CD8-positive, alpha-beta T cell (primary cell): ENCODE measurements at regions of chr4 and their contacts with region 1.

Region 1: GRCh38 chr4:107989537-107990386 is at the start of gene HADH:
- DNase-seq: peak; percentile 87 to 97 (median 94)
- ATAC-seq: peak; percentile 99
- H3K4me3 ChIP-seq: peak within 1 kb of the TSS; percentile 65 to 75
- H3K4me3 Mint-ChIP-seq: peak within 1 kb of the TSS; percentile 96
- H3K27ac ChIP-seq: peak within 1 kb of the TSS; percentile 70 to 74
- H3K27ac Mint-ChIP-seq: peak within 1 kb of the TSS; percentile 95
- H3K4me1 ChIP-seq: peaks cover 28% of the 10 kb centered on the region
- H3K4me1 Mint-ChIP-seq: peaks cover 60% of the 10 kb centered on the region
- H3K27me3 ChIP-seq: no peaks in the 10 kb centered on the region
- H3K27me3 Mint-ChIP-seq: no peaks in the 10 kb centered on the region
- CTCF ChIP-seq: no peak
- total RNA-seq, gene HADH: 9.6 to 10.9 TPM

Region 2: GRCh38 chr4:106315968-106316772 is 1673.6 kb before region 1 on chr4 and contains the starts of genes AIMP1 and TBCK:
- CTCF ChIA-PET with region 1: no interaction called
- POLR2A ChIA-PET with region 1: no interaction called
- intact Hi-C with region 1: loop called in 1 of 2 experiments (anchors 5 kb)
- DNase-seq: peak; percentile 81 to 95 (median 90)
- ATAC-seq: peak; percentile 85
- H3K4me3 ChIP-seq: peak within 1 kb of the TSS; percentile 72 to 85
- H3K4me3 Mint-ChIP-seq: no peak within 1 kb of the TSS
- H3K27ac ChIP-seq: peak within 1 kb of the TSS; percentile 89 to 96
- H3K27ac Mint-ChIP-seq: no peak within 1 kb of the TSS
- H3K4me1 ChIP-seq: peaks cover 19% of the 10 kb centered on the region
- H3K4me1 Mint-ChIP-seq: peaks cover 42% of the 10 kb centered on the region
- H3K27me3 ChIP-seq: no peaks in the 10 kb centered on the region
- H3K27me3 Mint-ChIP-seq: no peaks in the 10 kb centered on the region
- CTCF ChIP-seq: no peak
- total RNA-seq, gene AIMP1: 69.3 to 79.2 TPM
- total RNA-seq, gene TBCK: 17.4 to 20.4 TPM

Region 3: GRCh38 chr4:107906458-107907100 is 83.2 kb before region 1 on chr4:
- CTCF ChIA-PET with region 1: no interaction called
- POLR2A ChIA-PET with region 1: no interaction called
- intact Hi-C with region 1: no loop called
- DNase-seq: no peak
- ATAC-seq: no peak
- H3K4me3 ChIP-seq: no peak overlapping the region
- H3K4me3 Mint-ChIP-seq: no peak overlapping the region
- H3K27ac ChIP-seq: no peak overlapping the region
- H3K27ac Mint-ChIP-seq: no peak overlapping the region
- H3K4me1 ChIP-seq: no peaks in the 10 kb centered on the region
- H3K4me1 Mint-ChIP-seq: no peaks in the 10 kb centered on the region
- H3K27me3 ChIP-seq: no peaks in the 10 kb centered on the region
- H3K27me3 Mint-ChIP-seq: peaks cover 7% of the 10 kb centered on the region
- CTCF ChIP-seq: no peak

Region 4: DNA sequence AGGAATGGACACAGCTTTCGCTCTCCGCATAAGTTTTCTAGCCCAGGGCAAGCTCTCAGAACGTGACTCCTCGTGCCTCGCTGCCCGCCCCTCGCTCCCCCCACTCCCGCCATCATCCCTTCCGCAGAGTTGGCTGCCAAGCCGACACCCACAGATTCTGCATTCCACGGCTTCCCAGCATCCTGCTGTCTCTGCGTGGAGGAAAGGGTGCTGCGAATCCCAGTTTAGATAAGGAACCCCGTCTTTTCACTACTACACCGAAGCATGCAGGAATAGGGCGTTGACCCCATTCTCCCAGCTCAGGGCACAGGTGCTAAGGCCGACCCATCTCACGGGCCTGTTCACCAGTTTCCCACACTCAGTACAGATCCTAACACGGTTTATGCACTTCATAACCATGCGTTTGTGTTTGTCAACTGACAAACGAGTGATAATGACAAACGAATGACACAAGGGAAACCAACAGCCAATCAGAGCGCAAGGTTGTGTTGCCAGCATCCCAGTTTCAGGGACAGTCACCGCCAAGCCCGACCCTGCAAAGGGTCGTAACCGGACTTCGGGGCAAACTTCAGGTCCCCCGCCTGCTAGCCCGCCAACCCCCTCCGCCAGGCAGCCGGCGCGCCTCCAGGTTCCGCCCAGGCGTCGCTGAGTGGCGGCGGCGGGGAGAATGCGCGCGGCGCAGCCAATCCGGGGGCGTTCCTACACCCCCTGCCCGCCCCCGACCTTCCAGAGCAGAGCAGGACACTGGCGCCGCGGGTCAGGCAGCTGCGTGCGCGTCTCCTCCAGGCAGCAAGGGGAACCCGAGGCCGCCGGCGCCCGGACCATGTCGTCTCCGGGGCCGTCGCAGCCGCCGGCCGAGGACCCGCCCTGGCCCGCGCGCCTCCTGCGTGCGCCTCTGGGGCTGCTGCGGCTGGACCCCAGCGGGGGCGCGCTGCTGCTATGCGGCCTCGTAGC is 58.7 kb before region 1 on chr4 and contains the start of gene CYP2U1:
- CTCF ChIA-PET with region 1: no interaction called
- POLR2A ChIA-PET with region 1: interaction called, 4 read pairs
- intact Hi-C with region 1: loop called (anchors 1 to 2 kb)
- DNase-seq: peak; percentile 48 to 89 (median 80)
- ATAC-seq: peak; percentile 92
- H3K4me3 ChIP-seq: peak within 1 kb of the TSS; percentile 61 to 86
- H3K4me3 Mint-ChIP-seq: peak within 1 kb of the TSS; percentile 95
- H3K27ac ChIP-seq: peak within 1 kb of the TSS; percentile 48 to 55
- H3K27ac Mint-ChIP-seq: peak within 1 kb of the TSS; percentile 92
- H3K4me1 ChIP-seq: peaks cover 8% of the 10 kb centered on the region
- H3K4me1 Mint-ChIP-seq: peaks cover 35% of the 10 kb centered on the region
- H3K27me3 ChIP-seq: no peaks in the 10 kb centered on the region
- H3K27me3 Mint-ChIP-seq: no peaks in the 10 kb centered on the region
- CTCF ChIP-seq: no peak
- total RNA-seq, gene CYP2U1: 3.4 to 3.6 TPM

Region 5: DNA sequence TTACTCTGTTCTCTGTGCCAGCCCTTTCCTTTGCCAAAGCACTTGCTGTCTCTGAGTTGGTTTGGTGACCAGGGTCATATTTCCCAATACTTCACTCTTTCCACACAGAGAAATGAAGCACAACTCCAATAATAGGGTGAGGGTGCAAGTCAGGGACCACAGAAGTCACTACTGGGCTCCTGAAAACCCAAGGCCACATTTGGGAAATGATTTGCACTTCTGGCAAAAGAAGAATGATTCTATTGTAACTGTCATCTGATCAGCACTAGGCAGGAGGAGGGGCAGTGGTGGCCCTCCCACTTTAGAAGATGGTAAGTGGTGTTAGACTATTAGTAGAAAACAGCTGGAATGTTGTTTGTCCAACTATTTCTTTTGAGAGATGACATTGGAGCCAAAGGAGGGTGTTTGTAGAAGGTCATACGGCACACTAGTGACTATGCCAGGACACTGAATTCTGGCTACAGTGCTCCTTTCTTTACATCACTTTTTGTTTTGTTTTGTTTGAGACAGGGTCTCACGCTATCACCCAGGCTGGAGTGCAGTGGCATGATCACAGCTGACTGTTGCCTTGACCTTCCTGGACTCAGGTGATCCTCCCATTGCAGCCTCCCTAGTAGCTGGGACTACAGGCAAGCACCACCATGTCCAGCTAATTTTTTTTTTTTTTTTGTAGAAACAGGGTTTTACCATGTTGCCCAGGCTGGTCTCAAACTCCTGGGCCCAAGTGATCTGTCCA is 10.9 kb before region 1 on chr4:
- CTCF ChIA-PET with region 1: no interaction called
- POLR2A ChIA-PET with region 1: no interaction called
- intact Hi-C with region 1: no loop called
- DNase-seq: no peak
- ATAC-seq: no peak
- H3K4me3 ChIP-seq: no peak overlapping the region
- H3K4me3 Mint-ChIP-seq: no peak overlapping the region
- H3K27ac ChIP-seq: no peak overlapping the region
- H3K27ac Mint-ChIP-seq: no peak overlapping the region
- H3K4me1 ChIP-seq: no peaks in the 10 kb centered on the region
- H3K4me1 Mint-ChIP-seq: peaks cover 6% of the 10 kb centered on the region
- H3K27me3 ChIP-seq: no peaks in the 10 kb centered on the region
- H3K27me3 Mint-ChIP-seq: no peaks in the 10 kb centered on the region
- CTCF ChIP-seq: no peak

Region 6: DNA sequence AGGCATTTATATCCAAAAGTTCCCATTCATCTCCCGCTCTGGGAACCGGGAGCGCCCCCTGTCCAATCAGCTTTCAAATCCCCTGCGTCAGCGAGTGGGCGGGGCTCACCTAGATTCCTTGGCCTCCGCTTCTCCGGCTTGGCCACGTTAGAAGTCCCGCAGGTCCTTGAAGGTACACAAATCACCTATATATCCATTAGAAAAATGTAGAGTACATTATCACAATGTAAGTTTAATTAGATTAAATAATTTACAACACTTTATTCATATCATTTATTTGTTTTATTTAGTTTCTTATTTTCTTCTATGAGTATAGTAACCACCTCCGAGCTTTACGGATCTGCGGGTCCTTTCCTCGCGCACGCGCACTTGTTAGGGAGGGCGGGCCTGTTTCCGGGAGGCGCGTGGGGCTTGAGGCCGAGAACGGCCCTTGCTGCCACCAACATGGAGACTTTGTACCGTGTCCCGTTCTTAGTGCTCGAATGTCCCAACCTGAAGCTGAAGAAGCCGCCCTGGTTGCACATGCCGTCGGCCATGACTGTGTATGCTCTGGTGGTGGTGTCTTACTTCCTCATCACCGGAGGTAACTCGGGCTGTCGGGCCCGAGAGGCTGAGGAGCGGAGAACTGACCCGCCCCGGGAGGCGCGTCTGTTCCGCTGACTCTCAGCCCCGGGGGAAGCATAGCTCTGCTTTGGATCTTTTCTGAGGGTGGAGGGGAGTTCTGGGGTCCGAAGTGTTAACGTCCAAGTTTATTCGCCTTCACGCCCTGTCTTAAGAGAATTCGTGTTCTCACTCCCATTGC is 660.7 kb after region 1 on chr4 and contains the start of gene OSTC:
- CTCF ChIA-PET with region 1: no interaction called
- POLR2A ChIA-PET with region 1: interaction called, 3 read pairs
- intact Hi-C with region 1: loop called in 1 of 2 experiments (anchors 1 kb)
- DNase-seq: peak; percentile 81 to 96 (median 93)
- ATAC-seq: peak; percentile 89
- H3K4me3 ChIP-seq: peak within 1 kb of the TSS; percentile 83 to 98
- H3K4me3 Mint-ChIP-seq: peak within 1 kb of the TSS; percentile 93
- H3K27ac ChIP-seq: peak within 1 kb of the TSS; percentile 93 to 94
- H3K27ac Mint-ChIP-seq: peak within 1 kb of the TSS; percentile 98
- H3K4me1 ChIP-seq: peaks cover 23% of the 10 kb centered on the region
- H3K4me1 Mint-ChIP-seq: peaks cover 40% of the 10 kb centered on the region
- H3K27me3 ChIP-seq: no peaks in the 10 kb centered on the region
- H3K27me3 Mint-ChIP-seq: no peaks in the 10 kb centered on the region
- CTCF ChIP-seq: no peak
- total RNA-seq, gene OSTC: 25.6 to 28.1 TPM

Region 7: DNA sequence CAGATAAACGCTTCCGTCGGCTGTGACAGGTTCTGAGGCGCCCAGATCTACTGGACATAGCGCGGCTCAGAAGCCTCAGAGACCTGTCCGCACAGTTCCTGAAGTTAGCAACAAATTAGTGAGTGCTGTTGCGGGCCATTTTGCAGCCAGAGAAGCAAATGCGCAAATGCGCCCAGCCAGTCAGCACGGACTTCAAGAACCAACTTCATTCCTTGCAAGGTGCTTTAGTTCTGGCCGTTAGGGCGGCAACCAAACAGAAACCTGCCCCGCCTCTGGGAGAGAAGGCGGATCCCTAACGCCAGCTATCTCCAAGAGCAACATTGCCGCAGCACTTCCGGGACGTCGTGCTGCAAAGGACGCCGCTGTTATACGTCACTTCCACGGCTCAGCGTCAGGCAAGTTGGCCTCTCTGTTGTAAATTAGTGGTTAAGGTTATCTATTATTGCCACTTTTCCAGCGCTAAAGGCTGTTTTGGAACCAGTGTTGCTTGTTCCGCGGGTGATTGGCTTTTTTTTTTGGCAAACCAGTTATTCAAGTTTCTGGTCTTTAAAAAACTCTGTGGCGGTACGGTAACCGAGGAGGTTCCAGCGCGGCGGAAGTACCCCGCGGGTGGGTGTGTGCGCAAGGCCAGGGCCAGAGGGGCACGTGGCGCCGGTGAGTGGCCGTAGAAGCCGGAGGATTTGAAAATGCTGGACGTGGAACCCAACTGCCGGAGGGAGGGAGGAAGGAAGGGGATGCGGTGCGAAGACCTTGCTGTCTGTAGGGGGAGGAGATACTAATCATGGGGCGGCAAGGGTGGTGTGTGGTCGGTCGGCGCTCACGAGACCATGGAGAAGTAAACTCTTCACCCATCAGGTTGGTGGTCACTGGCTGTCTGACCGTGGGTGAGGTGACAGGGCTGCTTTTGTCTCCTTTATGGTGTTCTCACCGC is 1825.7 kb after region 1 on chr4 and contains the start of gene GAR1:
- CTCF ChIA-PET with region 1: no interaction called
- POLR2A ChIA-PET with region 1: no interaction called
- intact Hi-C with region 1: loop called in 1 of 2 experiments (anchors 5 kb)
- DNase-seq: peak; percentile 67 to 95 (median 86)
- ATAC-seq: peak; percentile 92
- H3K4me3 ChIP-seq: peak within 1 kb of the TSS; percentile 85 to 87
- H3K4me3 Mint-ChIP-seq: peak within 1 kb of the TSS; percentile 99
- H3K27ac ChIP-seq: peak within 1 kb of the TSS; percentile 96 to 97
- H3K27ac Mint-ChIP-seq: peak within 1 kb of the TSS; percentile 99
- H3K4me1 ChIP-seq: peaks cover 16% of the 10 kb centered on the region
- H3K4me1 Mint-ChIP-seq: peaks cover 43% of the 10 kb centered on the region
- H3K27me3 ChIP-seq: no peaks in the 10 kb centered on the region
- H3K27me3 Mint-ChIP-seq: no peaks in the 10 kb centered on the region
- CTCF ChIP-seq: no peak
- total RNA-seq, gene GAR1: 11.8 to 15.4 TPM